MCF 10A (cell line): ENCODE measurements at regions of chr12 and their contacts with region 1.

Region 1: GRCh38 chr12:57590536-57591479 is at the start of gene PIP4K2C:
- DNase-seq: peak; percentile 87
- H3K4me3 Mint-ChIP-seq: peak within 1 kb of the TSS; percentile 89
- H3K27ac Mint-ChIP-seq: peak within 1 kb of the TSS; percentile 86
- H3K4me1 Mint-ChIP-seq: peaks cover 16% of the 10 kb centered on the region
- H3K27me3 Mint-ChIP-seq: no peaks in the 10 kb centered on the region
- CTCF ChIP-seq: no peak
- total RNA-seq, gene PIP4K2C: 32.0 and 38.0 TPM in 2 replicates

Region 2: DNA sequence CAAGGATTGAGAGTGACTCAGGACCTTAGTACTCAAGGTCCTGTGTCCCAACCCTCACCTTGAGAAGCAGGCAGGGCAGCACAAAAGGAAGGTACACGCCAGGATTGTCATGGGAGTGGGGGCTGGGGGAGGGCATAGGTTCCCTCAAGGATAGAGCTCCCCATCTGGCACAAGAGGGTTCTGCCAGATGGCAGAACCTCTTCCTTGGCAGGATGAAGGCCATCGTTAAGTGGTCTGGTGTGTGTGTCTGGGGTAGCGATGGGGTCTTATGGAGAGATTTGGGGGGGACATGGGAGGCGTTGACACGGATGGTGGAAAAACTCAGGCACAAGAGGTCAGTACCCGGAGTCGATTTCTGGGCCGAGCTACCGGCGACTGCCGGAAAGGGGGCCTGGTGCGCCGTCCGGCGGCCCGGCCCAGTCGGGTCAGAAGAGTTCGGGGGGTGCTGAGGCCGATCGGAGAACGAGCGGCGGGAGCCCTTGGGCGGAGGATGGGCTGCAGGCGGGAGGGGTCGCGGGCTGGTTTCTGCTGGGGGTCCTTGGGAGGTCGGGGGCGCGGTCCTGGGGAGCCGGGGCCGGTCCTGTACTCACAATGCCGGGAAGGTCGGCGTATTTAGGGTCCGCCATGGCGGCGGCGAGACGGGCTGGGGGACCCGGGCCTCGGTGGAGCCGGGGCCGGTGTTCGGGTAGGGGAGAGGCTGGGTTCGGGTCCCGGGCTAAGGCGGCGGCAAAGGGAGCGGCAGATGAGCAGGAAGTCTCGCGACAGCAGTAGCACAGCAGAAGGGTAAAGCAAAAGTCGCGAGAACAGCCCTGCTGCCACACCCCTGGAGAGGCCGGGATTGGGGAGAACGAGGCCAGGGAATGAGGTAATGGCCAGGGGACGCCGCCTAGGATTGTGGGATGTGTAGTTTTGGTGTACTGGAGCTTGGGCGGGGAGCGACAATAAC is 44.1 kb before region 1 on chr12 and contains the start of gene DCTN2:
- CTCF ChIA-PET with region 1: interaction called, 5 read pairs
- POLR2A ChIA-PET with region 1: interaction called, 16 read pairs
- intact Hi-C with region 1: no loop called
- DNase-seq: peak; percentile 98
- H3K4me3 Mint-ChIP-seq: peak within 1 kb of the TSS; percentile 93
- H3K27ac Mint-ChIP-seq: peak within 1 kb of the TSS; percentile 98
- H3K4me1 Mint-ChIP-seq: peaks cover 32% of the 10 kb centered on the region
- H3K27me3 Mint-ChIP-seq: no peaks in the 10 kb centered on the region
- CTCF ChIP-seq: peak; percentile 18
- total RNA-seq, gene DCTN2: 149 and 188 TPM in 2 replicates

Region 3: DNA sequence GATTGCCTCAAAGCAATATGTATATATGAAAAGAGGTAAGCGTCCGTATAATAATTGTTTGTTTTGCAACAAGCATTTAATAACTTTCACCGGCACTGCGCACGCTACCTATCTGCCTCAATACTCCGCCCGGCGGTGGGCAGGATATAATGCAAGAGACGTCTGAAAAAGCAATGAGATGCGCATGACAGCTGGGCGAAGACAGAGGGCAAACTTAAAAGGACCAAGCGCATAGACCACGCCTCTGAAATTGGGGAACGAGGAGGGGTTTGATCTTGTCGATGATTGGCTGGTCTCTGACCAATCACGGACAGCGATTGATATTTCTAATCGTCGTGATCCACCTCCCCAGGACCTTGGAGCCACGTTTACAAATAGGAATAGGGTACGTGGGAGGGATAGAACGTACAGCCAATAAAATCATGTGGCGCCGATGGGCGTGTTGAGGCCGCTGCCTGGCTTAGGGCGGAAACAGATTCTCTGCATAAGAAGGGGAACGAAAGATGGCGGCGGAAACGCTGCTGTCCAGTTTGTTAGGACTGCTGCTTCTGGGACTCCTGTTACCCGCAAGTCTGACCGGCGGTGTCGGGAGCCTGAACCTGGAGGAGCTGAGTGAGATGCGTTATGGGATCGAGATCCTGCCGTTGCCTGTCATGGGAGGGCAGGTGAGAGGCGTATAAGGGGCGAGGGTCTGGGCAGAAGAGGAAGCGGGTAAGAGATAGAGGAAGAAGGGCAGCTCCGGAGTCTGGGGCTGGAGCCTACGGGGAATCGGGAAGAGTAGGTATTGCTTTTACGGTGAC is 103.1 kb after region 1 on chr12 and contains the start of gene OS9:
- CTCF ChIA-PET with region 1: interaction called, 24 read pairs
- POLR2A ChIA-PET with region 1: interaction called, 22 read pairs
- intact Hi-C with region 1: no loop called
- DNase-seq: peak; percentile 100
- H3K4me3 Mint-ChIP-seq: no peak within 1 kb of the TSS
- H3K27ac Mint-ChIP-seq: no peak within 1 kb of the TSS
- H3K4me1 Mint-ChIP-seq: no peaks in the 10 kb centered on the region
- H3K27me3 Mint-ChIP-seq: peaks cover 11% of the 10 kb centered on the region
- CTCF ChIP-seq: peak; percentile 48
- total RNA-seq, gene OS9: 125 and 173 TPM in 2 replicates

Region 4: DNA sequence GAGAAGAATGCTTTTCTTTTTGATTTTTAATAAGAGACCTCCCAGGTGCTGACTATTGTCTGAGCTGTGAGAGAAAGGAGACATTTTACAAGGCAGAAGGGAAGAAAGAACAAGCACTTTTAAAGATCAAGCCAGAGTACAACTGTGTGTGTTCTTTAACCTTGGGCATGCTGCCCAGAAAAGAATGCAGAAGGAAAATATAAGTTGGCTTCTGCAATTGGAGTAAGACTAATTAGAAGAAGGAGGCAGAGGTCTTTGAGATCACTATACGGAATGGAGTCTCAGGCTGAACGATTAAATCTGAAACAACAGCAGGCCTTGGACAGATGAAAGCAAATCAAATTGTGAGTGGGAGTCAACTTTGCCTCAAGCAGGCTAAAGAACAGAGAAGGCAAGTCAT is 581.1 kb after region 1 on chr12:
- CTCF ChIA-PET with region 1: no interaction called
- POLR2A ChIA-PET with region 1: no interaction called
- intact Hi-C with region 1: no loop called
- DNase-seq: no peak
- H3K4me3 Mint-ChIP-seq: no peak overlapping the region
- H3K27ac Mint-ChIP-seq: no peak overlapping the region
- H3K4me1 Mint-ChIP-seq: no peaks in the 10 kb centered on the region
- H3K27me3 Mint-ChIP-seq: no peaks in the 10 kb centered on the region
- CTCF ChIP-seq: no peak